ENCODE measurements at regions of chr21 and their contacts with region 1.

Region 1: GRCh38 chr21:32940079-32941014 is 85.4 kb upstream of the OLIG2 start:
- DNase-seq: peak; percentile 7 to 42
- ATAC-seq: peak in 1 of 2 experiments; percentile 71; a peak in 4 of 6 replicates
- H3K4me3 ChIP-seq: no peak overlapping the region
- H3K27ac ChIP-seq: no peak overlapping the region
- H3K4me1 ChIP-seq: peaks cover 5% of the 10 kb centered on the region; the same call in 1 of the 3 replicates
- CTCF ChIP-seq: peak; percentile 52
- EP300 ChIP-seq: no peak
- POLR2A ChIP-seq: no peak
- RAD21 ChIP-seq: peak; percentile 49 to 51

Region 2: DNA sequence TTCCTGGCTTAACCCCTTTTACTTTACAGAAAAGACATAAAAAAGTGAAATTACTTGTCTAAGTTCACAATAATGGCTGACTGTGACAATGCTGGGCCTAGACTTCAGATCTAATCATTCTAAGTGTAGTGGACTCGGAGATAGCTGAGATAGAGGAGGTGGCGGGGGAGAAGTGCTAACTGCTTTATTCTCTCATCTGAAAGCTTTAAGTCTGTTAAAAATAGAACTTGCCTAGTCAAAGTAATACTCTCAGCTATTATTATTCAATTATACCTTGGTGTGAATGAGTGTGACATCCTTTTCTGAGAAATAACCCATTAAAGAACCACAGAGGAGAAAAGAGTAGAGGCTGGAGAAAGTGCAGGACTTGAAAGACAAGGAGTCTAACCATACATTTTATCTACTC is 10.7 kb before region 1 on chr21:
- CTCF ChIA-PET with region 1: interaction called, 15 read pairs
- POLR2A ChIA-PET with region 1: no interaction called
- DNase-seq: no peak
- ATAC-seq: no peak
- H3K4me3 ChIP-seq: no peak overlapping the region
- H3K27ac ChIP-seq: no peak overlapping the region
- H3K4me1 ChIP-seq: no peaks in the 10 kb centered on the region
- CTCF ChIP-seq: no peak
- EP300 ChIP-seq: no peak
- POLR2A ChIP-seq: no peak
- RAD21 ChIP-seq: no peak